Natural killer cell (primary cell): ENCODE measurements at regions of chr3 and their contacts with region 1.

Region 1: DNA sequence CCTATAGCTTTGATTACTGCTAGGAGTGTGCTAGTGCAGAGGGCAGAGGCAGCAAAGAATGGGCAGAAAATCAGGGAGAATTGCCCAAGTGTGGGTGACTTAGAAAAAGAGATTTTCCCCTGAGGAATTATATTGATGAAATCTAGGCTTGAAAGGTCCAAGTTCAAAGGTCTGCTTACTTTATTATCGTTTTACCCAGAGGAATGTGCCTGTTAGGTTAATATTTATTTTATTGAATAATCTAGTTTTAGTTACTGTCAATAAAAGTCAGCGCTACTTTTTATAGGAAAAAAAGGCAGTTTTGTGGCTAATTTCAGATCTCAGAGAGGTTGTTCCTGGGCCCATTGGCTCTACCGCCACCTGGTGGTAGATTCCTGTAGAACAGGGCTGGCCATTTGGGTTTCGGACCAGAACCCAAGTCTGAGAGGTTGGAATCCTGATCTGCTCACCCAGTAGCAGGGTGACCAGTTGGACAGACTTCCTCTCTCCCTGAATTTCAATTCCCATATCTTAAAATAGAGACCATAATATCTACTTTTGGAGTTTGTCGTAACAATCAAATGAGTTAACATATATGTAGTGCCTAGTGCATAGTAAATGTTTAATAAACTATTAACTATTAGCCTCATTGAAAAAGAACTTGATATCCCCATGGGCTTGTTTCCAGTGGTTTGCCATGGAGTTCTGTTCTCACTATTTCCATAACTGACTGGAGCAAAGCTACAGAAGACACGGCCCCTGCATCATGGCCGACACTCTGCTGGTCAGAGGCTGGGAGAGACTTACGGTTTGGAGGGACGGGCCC is 62.7 kb upstream of the ZNF148 start:
- DNase-seq: peak; percentile 58 to 80
- ATAC-seq: peak; percentile 60 to 73 (median 61)
- H3K4me3 ChIP-seq: no peak overlapping the region
- H3K4me3 Mint-ChIP-seq: no peak overlapping the region
- H3K27ac ChIP-seq: no peak overlapping the region
- H3K27ac Mint-ChIP-seq: no peak overlapping the region
- H3K4me1 ChIP-seq: no peaks in the 10 kb centered on the region
- H3K4me1 Mint-ChIP-seq: no peaks in the 10 kb centered on the region
- H3K27me3 ChIP-seq: no peaks in the 10 kb centered on the region
- H3K27me3 Mint-ChIP-seq: no peaks in the 10 kb centered on the region
- CTCF ChIP-seq: peak; percentile 97

Region 2: GRCh38 chr3:124761250-124761796 is 676.5 kb before region 1 on chr3:
- intact Hi-C with region 1: loop called (anchors 10 kb)
- DNase-seq: peak; percentile 74 to 88
- ATAC-seq: peak; percentile 80 to 96 (median 96)
- H3K4me3 ChIP-seq: no peak overlapping the region
- H3K4me3 Mint-ChIP-seq: peak overlapping the region; percentile 25
- H3K27ac ChIP-seq: no peak overlapping the region
- H3K27ac Mint-ChIP-seq: peak overlapping the region in 1 of 2 donors; percentile 57
- H3K4me1 ChIP-seq: peaks cover 7% of the 10 kb centered on the region
- H3K4me1 Mint-ChIP-seq: peaks cover 0 to 6% of the 10 kb centered on the region in 2 donors
- H3K27me3 ChIP-seq: no peaks in the 10 kb centered on the region
- H3K27me3 Mint-ChIP-seq: peaks cover 0 to 2% of the 10 kb centered on the region in 2 donors
- CTCF ChIP-seq: peak; percentile 83

Region 3: DNA sequence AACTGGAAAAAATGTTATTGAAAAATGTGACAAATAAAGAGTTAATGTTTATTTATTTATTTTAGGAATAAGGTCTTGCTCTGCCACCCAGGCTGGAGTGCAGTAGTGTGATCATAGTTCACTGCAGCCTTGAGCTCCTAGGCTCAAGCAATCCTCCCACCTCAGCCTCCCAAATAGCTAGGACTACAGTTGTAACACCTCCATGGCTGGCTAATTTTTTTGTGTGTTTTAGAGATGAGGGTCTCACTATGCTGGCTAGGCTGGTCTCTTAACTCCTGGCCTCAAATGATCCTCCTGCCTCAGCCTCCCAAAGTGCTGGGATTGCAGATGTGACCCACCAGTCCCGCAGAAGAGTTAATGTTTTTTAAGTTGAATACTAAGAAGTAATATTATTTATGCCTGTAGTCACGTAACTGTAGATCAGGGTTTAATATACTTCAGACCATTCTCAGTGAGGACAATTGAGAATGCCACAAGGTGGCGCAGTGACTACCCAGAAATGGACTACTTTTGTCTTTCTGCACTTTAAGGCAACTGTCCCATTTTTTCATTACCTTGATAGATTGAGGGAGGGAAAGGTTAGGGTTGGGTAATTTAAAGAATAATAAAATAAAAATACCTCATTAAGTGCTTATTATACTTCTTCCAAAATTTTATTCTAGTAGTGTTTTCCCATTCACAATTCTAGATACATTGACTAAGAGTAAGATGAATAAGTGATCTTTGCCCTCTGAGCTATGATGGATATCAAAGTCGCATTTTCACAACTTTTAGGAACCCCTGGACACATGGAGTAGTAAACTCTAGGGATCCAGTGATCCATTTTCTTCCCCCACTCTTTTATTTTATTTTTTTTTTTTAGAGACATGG is 509.3 kb before region 1 on chr3:
- intact Hi-C with region 1: loop called (anchors 1 kb)
- DNase-seq: peak; percentile 38 to 80
- ATAC-seq: peak in 2 of 3 donors; percentile 60 to 74
- H3K4me3 ChIP-seq: no peak overlapping the region
- H3K4me3 Mint-ChIP-seq: no peak overlapping the region
- H3K27ac ChIP-seq: no peak overlapping the region
- H3K27ac Mint-ChIP-seq: no peak overlapping the region
- H3K4me1 ChIP-seq: no peaks in the 10 kb centered on the region
- H3K4me1 Mint-ChIP-seq: no peaks in the 10 kb centered on the region
- H3K27me3 ChIP-seq: no peaks in the 10 kb centered on the region
- H3K27me3 Mint-ChIP-seq: peaks cover 15 to 17% of the 10 kb centered on the region in 2 donors
- CTCF ChIP-seq: peak; percentile 72

Region 4: GRCh38 chr3:124995460-124995994 is 442.3 kb before region 1 on chr3:
- intact Hi-C with region 1: loop called (anchors 1 kb)
- DNase-seq: peak; percentile 51 to 81
- ATAC-seq: peak; percentile 90 to 98 (median 97)
- H3K4me3 ChIP-seq: no peak overlapping the region
- H3K4me3 Mint-ChIP-seq: no peak overlapping the region
- H3K27ac ChIP-seq: peak overlapping the region; percentile 42
- H3K27ac Mint-ChIP-seq: peak overlapping the region; percentile 69 to 83
- H3K4me1 ChIP-seq: peaks cover 12% of the 10 kb centered on the region
- H3K4me1 Mint-ChIP-seq: peaks cover 11 to 17% of the 10 kb centered on the region in 2 donors
- H3K27me3 ChIP-seq: no peaks in the 10 kb centered on the region
- H3K27me3 Mint-ChIP-seq: no peaks in the 10 kb centered on the region
- CTCF ChIP-seq: peak; percentile 75

Region 5: DNA sequence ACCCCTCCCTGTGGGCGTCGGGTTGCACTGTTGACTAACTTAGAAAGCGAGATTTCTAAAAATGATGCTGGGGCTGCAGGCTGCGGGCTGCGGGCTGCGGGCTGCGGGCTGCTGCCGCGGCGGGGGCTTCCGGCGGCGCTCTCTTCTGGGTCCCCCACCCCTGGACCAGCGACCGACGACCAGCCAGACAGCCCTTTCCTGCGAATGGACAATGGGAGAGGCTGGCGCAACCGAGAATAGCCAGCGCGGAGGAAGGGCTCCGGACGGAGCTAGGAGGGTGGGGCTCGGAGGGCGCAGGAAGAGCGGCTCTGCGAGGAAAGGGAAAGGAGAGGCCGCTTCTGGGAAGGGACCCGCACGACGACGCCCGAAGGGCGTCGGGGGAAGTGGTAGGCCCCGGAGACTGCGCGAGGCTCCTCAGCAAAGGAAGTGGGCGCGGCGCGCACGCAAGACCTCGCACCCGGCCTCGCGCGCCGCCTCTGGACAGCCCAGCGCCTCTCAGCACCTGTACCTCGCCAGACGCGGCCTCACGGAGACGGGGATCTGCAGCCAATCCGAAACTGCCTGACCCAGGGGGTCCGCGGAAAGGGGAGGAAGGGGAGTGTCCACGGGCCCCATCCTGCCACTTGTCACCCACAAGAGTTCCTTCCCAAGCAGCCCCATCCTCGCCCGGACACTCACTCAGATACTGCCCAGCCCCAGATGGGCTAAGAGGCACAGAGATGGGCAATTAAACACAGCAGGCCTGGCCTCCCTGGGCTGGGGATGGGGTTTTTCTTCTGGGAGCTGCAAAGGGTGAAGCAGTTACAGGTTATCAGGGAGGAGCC is 296.0 kb before region 1 on chr3:
- intact Hi-C with region 1: loop called (anchors 10 kb)
- DNase-seq: peak; percentile 61 to 86
- ATAC-seq: peak; percentile 87 to 91 (median 91)
- H3K4me3 ChIP-seq: peak overlapping the region; percentile 29
- H3K4me3 Mint-ChIP-seq: peak overlapping the region; percentile 86
- H3K27ac ChIP-seq: peak overlapping the region; percentile 59
- H3K27ac Mint-ChIP-seq: peak overlapping the region; percentile 84 to 95
- H3K4me1 ChIP-seq: peaks cover 57% of the 10 kb centered on the region
- H3K4me1 Mint-ChIP-seq: peaks cover 46 to 66% of the 10 kb centered on the region in 2 donors
- H3K27me3 ChIP-seq: no peaks in the 10 kb centered on the region
- H3K27me3 Mint-ChIP-seq: no peaks in the 10 kb centered on the region
- CTCF ChIP-seq: peak; percentile 6

Region 6: GRCh38 chr3:125496701-125497100 is 58.9 kb after region 1 on chr3:
- intact Hi-C with region 1: no loop called
- DNase-seq: no peak
- ATAC-seq: no peak
- H3K4me3 ChIP-seq: no peak overlapping the region
- H3K4me3 Mint-ChIP-seq: no peak overlapping the region
- H3K27ac ChIP-seq: no peak overlapping the region
- H3K27ac Mint-ChIP-seq: no peak overlapping the region
- H3K4me1 ChIP-seq: no peaks in the 10 kb centered on the region
- H3K4me1 Mint-ChIP-seq: no peaks in the 10 kb centered on the region
- H3K27me3 ChIP-seq: no peaks in the 10 kb centered on the region
- H3K27me3 Mint-ChIP-seq: no peaks in the 10 kb centered on the region
- CTCF ChIP-seq: no peak